IMR-90 (cell line): ENCODE measurements at regions of chr12 and their contacts with region 1.

Region 1: GRCh38 chr12:57888409-57889157 is 42.1 kb upstream of the CTDSP2 start:
- DNase-seq: peak; percentile 76
- ATAC-seq: peak; percentile 33
- H3K4me3 ChIP-seq: peak overlapping the region; percentile 1; the same call in 1 of the 2 replicates
- H3K27ac ChIP-seq: peak overlapping the region; percentile 90
- H3K4me1 ChIP-seq: peaks cover 41% of the 10 kb centered on the region
- H3K27me3 ChIP-seq: no peaks in the 10 kb centered on the region
- CTCF ChIP-seq: no peak
- POLR2A ChIP-seq: peak; percentile 37; the same call in 1 of the 2 replicates
- RAD21 ChIP-seq: no peak

Region 2: DNA sequence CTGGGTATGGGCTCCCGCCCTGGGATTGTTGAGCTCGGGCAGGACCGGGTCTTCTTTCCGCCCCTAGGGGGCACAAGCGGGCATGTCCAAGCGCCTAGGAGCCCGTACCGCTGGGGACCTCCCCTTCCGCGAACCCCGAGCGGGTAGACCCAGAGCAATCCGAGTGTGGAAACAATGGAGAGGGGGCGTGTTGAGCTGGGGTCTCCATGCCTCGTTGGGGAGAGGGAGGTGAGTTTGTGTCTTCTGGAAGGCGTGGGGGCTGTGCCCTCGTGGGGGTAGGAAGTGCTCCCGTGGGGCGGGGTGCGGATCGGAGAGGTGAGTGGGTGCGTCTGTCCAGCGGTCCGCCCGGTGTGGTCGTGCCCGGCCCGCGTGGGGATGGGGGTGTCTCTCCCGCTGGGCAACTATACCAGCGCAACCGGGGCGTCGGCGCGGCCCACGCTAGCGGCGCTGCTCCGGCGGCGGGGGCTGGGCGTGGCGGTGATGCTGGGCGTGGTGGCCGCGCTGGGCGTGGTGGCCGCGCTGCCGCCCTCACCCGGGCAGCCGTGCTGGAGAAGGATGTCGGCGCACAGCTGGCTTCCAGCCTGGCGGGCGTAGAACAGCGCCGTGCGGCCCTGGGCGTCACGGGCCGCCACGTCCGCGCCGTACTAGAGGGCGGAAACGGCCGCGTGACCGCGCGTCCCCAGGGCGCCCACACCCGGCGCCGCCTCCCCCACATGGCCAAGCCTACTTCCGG is 162.3 kb before region 1 on chr12:
- CTCF ChIA-PET with region 1: no interaction called
- POLR2A ChIA-PET with region 1: no interaction called
- dilution Hi-C with region 1: no loop called
- in situ Hi-C with region 1: no loop called
- intact Hi-C with region 1: no loop called
- DNase-seq: peak; percentile 76
- ATAC-seq: peak; percentile 93
- H3K4me3 ChIP-seq: peak overlapping the region; percentile 70
- H3K27ac ChIP-seq: peak overlapping the region; percentile 80
- H3K4me1 ChIP-seq: 0 out of 2 replicates have a peak, but pooled peaks cover 4% of the 10 kb centered on the region
- H3K27me3 ChIP-seq: peaks cover 5% of the 10 kb centered on the region; the same call in 1 of the 2 replicates
- CTCF ChIP-seq: peak; percentile 85
- POLR2A ChIP-seq: no peak; the same call in none of the 2 replicates
- RAD21 ChIP-seq: peak; percentile 57

Region 3: DNA sequence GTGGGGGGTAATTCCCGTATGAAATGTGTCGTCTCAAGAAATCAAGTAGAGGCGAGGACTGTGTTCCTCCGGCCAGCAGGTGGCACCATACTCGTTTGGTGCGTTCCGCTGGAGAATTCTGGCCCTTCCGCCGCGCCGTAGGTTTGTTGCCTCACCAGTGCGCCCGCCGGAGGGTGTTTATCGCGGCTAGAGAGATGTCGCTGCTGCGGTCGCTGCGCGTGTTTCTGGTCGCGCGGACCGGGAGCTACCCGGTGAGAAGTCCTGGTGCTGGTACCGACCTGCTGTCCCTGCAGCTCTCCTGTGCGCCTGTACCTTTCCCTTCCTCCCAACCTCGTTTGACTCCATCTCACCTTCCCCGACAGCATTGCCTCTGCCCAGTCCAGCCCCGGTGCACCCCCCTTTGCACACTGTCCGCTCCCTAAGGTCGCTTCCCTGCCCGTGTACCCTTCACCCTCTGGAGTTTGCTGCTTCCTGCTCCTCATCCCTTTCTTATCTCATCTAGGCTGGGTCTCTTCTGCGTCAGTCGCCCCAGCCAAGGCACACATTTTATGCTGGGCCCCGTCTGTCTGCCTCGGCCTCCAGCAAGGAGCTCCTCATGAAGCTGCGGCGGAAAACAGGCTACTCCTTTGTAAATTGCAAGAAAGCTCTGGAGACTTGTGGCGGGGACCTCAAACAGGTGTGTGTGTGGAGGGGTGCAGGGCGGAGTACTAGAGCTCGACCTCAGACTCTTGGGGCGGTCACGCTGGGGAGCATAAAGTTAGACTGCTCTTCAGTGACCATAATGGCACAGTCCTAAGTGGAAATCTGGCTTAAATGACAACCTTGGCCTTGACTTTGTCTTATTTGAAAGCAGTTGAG is 105.7 kb before region 1 on chr12 and contains the start of gene TSFM:
- CTCF ChIA-PET with region 1: no interaction called
- POLR2A ChIA-PET with region 1: no interaction called
- dilution Hi-C with region 1: no loop called
- in situ Hi-C with region 1: no loop called
- intact Hi-C with region 1: no loop called
- DNase-seq: peak; percentile 93
- ATAC-seq: peak; percentile 98
- H3K4me3 ChIP-seq: peak within 1 kb of the TSS; percentile 94
- H3K27ac ChIP-seq: peak within 1 kb of the TSS; percentile 73
- H3K4me1 ChIP-seq: 0 out of 2 replicates have a peak, but pooled peaks cover 2% of the 10 kb centered on the region
- H3K27me3 ChIP-seq: no peaks in the 10 kb centered on the region
- CTCF ChIP-seq: peak; percentile 97
- POLR2A ChIP-seq: peak; percentile 61
- RAD21 ChIP-seq: peak; percentile 50
- total RNA-seq, gene TSFM: 10.8 and 11.5 TPM in 2 replicates

Region 4: DNA sequence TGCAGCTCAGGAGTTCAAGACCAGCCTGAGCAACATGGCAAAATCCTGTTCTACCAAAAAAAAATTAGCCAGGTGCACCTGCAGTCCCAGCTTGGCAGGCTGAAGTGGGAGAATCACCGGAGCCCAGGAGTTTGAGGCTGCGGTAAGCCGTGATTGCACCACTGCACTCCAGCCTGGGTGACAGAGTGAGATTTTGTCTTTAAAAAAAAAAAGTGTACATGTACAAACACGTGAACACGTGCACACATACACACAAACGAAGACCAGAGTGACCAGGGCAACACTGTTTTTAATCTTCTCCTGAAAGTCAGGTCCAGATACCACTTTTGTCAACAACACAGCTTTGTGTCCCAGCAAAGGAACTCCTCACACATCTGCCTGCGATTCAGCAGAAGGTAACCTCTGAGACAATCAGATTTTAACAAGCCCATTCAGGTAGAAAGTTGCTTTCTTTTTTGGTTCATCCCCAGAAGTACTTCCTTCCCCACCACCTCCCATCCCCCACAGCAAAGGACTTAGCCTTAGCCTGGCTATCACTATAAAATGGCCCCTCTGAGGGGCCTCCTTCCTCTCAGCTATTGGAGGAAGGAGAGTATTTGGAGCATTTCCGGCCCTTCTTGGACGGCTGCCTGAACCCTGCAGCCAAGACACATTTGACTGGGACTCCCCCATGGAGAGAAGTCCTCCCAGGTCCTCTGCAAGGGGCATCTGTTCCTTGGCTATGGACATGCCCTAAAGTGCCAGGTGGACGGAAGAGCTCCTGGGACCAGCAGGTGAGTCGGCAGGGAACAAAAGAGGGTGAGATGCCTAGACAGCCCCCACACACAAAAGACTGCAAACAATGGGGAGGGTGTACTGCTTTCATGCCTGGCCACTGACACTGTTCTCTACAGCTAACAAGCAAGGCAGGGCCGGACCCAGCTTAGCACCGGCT is 51.9 kb before region 1 on chr12:
- CTCF ChIA-PET with region 1: interaction called, 10 read pairs
- POLR2A ChIA-PET with region 1: no interaction called
- dilution Hi-C with region 1: no loop called
- in situ Hi-C with region 1: loop called (anchors 10 kb)
- intact Hi-C with region 1: no loop called
- DNase-seq: peak; percentile 86
- ATAC-seq: peak; percentile 66
- H3K4me3 ChIP-seq: no peak overlapping the region
- H3K27ac ChIP-seq: peak overlapping the region; percentile 77
- H3K4me1 ChIP-seq: peaks cover 66% of the 10 kb centered on the region
- H3K27me3 ChIP-seq: no peaks in the 10 kb centered on the region
- CTCF ChIP-seq: no peak
- POLR2A ChIP-seq: no peak
- RAD21 ChIP-seq: no peak

Region 5: GRCh38 chr12:57874166-57875108 is 14.1 kb before region 1 on chr12:
- CTCF ChIA-PET with region 1: interaction called, 4 read pairs
- POLR2A ChIA-PET with region 1: interaction called, 15 read pairs
- dilution Hi-C with region 1: no loop called
- in situ Hi-C with region 1: no loop called
- intact Hi-C with region 1: no loop called
- DNase-seq: no peak
- ATAC-seq: no peak
- H3K4me3 ChIP-seq: no peak overlapping the region
- H3K27ac ChIP-seq: no peak overlapping the region
- H3K4me1 ChIP-seq: 0 out of 2 replicates have a peak, but pooled peaks cover 2% of the 10 kb centered on the region
- H3K27me3 ChIP-seq: no peaks in the 10 kb centered on the region
- CTCF ChIP-seq: no peak
- POLR2A ChIP-seq: no peak
- RAD21 ChIP-seq: no peak